ENCODE measurements at regions of chr9 and their contacts with region 1.

Region 1: GRCh38 chr9:85258823-85259370 is 482.9 kb downstream of the AGTPBP1 start:
- DNase-seq: peak; percentile 68 to 97 (median 82)

Region 2: DNA sequence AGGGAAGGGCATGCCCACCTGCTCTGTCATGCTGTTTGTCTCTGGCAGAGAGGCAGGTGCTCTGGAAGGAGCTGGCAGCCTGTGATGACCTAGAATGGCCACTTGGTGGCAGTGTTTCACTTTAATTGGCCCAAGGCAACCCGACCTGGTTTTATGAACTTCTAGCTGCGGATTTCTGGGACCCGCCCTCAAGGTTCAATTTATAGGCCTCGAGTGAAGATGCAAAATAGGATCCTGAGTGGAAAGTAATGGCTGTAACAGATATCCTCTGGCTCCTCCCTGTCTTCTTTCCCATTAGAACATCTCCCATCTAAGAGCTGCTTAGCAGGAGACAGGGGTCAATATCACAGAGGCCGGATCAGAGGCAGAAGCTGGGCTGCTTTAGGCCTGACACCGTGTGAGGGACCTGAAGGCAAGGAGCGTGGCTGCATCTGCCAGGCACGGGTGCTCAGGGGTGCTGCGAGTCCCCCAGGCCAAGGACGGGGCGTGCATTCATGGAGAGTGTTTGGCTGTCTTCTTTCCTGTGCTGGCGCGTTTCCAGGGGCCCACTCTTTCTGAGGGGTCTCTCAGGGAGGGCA is 861.7 kb before region 1 on chr9:
- intact Hi-C with region 1: loop called (anchors 10 kb)
- DNase-seq: peak; percentile 60 to 96 (median 74)

Region 3: GRCh38 chr9:84932915-84933527 is 325.9 kb before region 1 on chr9:
- intact Hi-C with region 1: loop called (anchors 10 kb)
- DNase-seq: no peak

Region 4: DNA sequence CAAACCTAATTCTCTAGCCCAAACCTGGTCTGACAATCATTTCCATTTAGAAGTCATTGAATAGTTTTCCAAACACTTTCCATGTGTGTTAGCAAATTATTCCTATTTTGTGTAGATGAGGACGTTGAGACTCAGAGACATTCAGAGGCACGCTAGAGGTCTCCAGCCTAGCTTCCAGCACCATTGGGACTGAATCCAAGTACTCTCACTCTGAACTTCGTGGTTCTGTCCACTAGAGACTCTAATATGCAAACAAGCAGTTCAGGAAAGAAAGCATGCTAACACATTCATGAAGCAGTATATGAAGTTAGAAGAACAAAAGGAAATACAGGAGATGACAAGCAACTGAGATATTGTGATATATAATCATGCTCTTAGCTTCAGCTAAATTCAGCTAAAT is 234.5 kb before region 1 on chr9:
- intact Hi-C with region 1: loop called (anchors 10 kb)
- DNase-seq: peak in 4 of 10 donors; percentile 28 to 88 (median 54)

Measured in posterior cingulate gyrus (tissue), 11 donors.